ENCODE measurements at regions of chr14 and their contacts with region 1.

Region 1: DNA sequence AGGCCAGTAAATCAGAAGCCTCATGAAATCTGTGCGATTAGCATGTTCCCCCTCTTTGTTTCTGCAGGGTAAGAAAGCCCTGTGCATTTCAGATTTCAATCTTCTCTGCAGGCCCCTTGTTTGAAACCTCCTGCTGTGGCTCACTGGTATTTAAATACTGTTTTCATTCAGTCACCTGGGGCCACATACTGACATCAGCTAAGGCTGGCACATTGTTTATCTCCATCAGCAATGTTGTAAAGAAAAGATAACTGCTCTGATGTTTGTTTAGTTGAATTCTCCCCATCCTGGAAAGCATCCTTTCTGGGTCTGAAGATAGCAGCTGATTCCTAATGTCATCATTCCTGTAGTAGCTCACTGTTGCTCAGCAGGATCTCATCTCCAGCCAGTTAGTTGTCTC is 554.9 kb downstream of the NRXN3 start:
- DNase-seq: no peak
- H3K4me3 ChIP-seq: no peak overlapping the region
- H3K27ac ChIP-seq: no peak overlapping the region
- H3K4me1 ChIP-seq: no peaks in the 10 kb centered on the region
- H3K27me3 ChIP-seq: no peaks in the 10 kb centered on the region
- CTCF ChIP-seq: no peak
- POLR2A ChIP-seq: no peak

Region 2: GRCh38 chr14:76926521-76927251 is 1798.4 kb before region 1 on chr14:
- intact Hi-C with region 1: no loop called
- DNase-seq: no peak
- H3K4me3 ChIP-seq: no peak overlapping the region
- H3K27ac ChIP-seq: peak overlapping the region in 1 of 2 donors; percentile 12
- H3K4me1 ChIP-seq: no peaks in the 10 kb centered on the region
- H3K27me3 ChIP-seq: no peaks in the 10 kb centered on the region
- CTCF ChIP-seq: no peak
- POLR2A ChIP-seq: no peak

Region 3: DNA sequence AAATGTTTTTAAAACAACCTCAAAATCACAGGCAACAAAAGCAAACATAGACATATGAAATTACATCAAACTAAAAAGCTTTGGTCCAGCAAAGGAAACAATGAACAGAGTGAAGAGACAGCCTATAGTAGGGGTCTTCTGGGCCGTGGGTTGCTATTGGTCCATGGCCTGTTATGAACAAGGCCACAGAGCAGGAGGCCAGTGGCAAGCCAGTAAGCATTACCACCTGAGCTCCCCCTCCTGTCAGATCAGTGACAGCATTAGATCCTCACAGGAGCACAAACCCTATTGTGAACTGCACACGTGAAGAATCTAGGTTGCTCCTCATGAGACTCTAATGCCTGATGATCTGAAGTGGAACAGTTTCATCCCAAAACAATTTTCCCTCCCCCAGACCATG is 1312.3 kb after region 1 on chr14:
- intact Hi-C with region 1: loop called (anchors 5 kb)
- DNase-seq: no peak
- H3K4me3 ChIP-seq: no peak overlapping the region
- H3K27ac ChIP-seq: no peak overlapping the region
- H3K4me1 ChIP-seq: no peaks in the 10 kb centered on the region
- H3K27me3 ChIP-seq: no peaks in the 10 kb centered on the region
- CTCF ChIP-seq: no peak
- POLR2A ChIP-seq: no peak

Measured in breast epithelium (tissue), 4 donors.